Cardiac septum (tissue), 1 donor: ENCODE measurements at regions of chr13 and their contacts with region 1.

Region 1: DNA sequence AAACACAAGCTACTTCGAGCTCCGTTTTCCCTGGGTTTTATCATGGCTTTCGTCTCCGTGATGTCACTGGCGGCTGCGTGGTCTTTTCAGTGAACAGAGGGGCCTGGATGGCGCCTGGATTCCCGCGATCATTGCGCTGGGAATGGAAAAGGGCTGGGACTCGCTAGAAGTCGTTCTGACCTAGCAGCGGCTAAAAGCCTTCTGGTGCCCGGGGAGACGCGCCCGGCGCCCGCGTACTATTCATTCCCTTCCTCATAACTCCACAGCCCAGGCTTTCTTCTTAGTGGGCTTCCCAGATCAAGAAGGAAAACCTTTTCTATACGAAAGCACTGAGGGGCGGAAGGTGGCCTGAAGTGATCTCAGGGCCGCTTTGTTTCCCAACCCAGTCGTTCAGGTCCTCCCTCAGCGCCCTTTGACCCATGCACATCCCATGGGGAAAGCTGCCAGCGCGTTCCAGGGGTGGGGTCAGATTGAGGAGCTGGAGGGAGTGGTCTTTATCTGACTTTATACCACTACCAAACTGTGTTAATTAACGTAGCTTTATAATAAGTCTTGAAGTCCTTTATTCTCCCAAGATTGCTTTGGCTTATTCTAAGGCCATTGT is 96.6 kb downstream of the ELF1 start:
- DNase-seq: no peak

Region 2: DNA sequence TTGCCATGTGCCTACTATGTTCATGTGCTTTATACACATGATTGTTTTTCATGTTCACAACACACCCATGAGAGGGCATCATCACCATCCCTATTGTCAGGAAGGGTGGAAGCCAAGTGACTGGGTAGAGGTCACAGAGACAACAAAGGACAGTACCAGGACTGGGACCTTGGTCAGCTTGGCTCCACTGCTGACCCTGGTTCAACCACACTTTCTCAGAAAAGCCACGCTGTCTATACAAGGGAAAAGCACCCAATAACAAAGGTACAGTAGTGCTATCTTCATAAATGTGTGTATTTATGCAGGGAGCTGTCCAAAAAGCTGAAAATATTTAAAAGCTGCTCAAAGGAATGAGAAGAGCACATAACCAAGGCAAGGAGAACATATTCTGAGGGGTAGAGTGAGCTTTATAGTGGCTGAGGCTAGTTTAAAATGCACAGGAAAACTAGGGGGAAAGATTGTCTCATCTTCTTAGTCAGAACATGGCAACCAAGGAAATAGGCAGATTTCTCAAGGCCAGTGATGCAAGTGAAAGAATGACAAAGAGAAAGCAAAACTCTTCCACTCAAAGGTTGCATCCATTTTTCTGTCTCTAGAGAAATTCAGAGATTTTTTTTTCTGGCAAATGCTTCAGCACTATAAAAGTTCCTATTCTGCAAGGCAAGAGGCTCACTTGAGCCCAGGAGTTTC is 671.1 kb before region 1 on chr13:
- intact Hi-C with region 1: no loop called
- DNase-seq: no peak

Region 3: GRCh38 chr13:40789275-40790133 is 133.0 kb before region 1 on chr13 and contains the start of gene SLC25A15:
- intact Hi-C with region 1: loop called (anchors 10 kb)
- DNase-seq: peak; percentile 88
- total RNA-seq, gene SLC25A15: 4.4 TPM

Region 4: DNA sequence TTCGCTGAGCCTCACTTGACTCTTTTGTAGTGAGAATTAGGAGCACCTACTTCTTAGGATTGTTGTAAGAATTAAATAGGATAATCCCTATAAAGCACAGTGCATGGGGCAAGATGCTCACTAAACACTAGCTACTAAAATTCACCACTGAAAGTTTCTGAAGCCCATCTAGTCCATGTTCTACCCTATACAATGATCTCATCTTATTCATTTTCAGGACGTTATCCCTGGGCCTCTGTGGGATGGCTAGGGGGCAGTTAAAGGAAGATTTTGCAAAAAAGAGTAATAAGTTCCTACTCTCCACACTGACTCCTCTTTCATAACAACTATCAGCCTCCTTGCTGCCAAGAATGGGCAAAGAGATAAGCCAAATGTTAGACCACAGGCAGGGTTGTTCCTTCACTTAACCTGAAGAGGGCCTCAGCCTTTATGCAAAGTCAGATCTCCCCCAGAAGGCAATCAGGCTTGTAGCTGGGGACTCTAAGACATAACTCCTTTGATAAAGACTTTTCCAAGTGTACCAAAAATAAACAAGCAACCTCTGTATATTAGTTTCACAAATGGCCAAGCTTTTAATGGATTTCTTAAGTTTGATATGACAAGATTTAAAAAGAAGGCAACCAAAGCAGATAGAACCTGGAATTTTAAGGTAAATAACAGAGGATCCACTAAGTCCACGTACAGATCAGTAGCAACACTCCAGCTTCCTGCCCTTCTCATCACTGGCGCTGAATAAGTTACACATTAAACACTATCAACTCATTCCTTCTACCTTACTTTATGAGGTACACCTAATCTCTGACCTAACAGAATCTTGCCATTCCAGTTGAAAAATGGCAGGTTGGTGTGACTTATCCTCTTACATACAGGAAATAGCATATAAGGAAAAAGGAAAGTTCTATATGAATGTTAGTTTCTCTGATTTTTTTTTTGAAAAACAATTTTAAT is 52.2 kb after region 1 on chr13:
- intact Hi-C with region 1: loop called (anchors 10 kb)
- DNase-seq: no peak

Region 5: GRCh38 chr13:41054919-41055619 is 132.5 kb after region 1 on chr13:
- intact Hi-C with region 1: loop called (anchors 5 kb)
- DNase-seq: no peak

Region 6: GRCh38 chr13:41231786-41232185 is 309.2 kb after region 1 on chr13:
- intact Hi-C with region 1: no loop called
- DNase-seq: no peak